Caco-2 (cell line): ENCODE measurements at regions of chr5 and their contacts with region 1.

Region 1: DNA sequence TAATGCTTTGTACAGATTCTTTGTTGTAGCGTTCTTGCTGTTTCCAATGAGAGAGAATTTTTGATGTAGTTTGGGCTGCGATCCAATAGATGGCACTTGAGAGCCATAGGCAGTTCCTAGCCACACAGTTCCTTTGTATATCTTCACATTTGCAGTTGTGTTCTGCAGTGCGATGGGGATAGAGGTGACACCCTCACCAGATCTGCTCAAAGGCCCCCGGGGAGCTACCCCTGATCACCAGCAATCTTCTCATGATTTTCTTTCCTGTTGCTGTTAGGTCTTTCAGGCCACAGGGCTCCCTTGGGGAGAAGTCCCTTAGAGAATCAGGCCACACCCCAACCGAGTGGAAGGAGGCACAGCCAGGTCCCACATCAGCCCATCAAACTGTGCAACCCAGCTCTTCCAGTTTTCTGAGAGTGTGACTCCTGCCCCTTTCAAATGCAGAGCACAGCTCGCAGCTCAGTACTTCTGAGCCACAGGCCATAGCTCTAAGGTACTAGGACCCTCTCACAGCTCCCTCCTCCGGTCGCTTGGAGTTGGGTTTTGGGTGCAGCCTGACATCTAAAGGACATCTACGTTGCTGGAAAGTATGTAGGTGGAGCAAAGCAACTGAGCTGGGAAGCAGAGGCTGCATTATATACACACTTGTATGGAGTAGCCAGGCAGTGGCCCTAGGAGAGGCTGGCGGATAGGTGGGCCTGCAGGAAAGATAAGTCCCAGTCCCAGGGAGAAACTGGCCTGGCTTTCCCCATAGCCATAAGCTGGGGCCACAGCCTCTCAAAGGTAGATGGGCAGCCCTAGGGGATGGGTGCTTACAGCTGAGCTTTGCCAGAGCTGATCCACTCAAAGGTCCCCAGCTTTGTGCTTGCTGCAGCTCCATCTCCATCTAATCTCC is 353.5 kb downstream of the SLCO4C1 start:
- DNase-seq: peak; percentile 39 to 59
- H3K4me3 ChIP-seq: no peak overlapping the region
- H3K4me3 Mint-ChIP-seq: no peak overlapping the region
- H3K27ac Mint-ChIP-seq: no peak overlapping the region
- H3K4me1 ChIP-seq: no peaks in the 10 kb centered on the region
- H3K4me1 Mint-ChIP-seq: no peaks in the 10 kb centered on the region
- H3K27me3 ChIP-seq: no peaks in the 10 kb centered on the region; the same call in 1 of the 2 replicates
- H3K27me3 Mint-ChIP-seq: peaks cover 3% of the 10 kb centered on the region
- CTCF ChIP-seq: peak; percentile 69 to 93

Region 2: GRCh38 chr5:101897914-101898313 is 44.7 kb before region 1 on chr5:
- CTCF ChIA-PET with region 1: no interaction called
- POLR2A ChIA-PET with region 1: no interaction called
- intact Hi-C with region 1: no loop called
- DNase-seq: peak in 1 of 2 experiments; percentile 34
- H3K4me3 ChIP-seq: no peak overlapping the region
- H3K4me3 Mint-ChIP-seq: no peak overlapping the region
- H3K27ac Mint-ChIP-seq: no peak overlapping the region
- H3K4me1 ChIP-seq: no peaks in the 10 kb centered on the region
- H3K4me1 Mint-ChIP-seq: no peaks in the 10 kb centered on the region
- H3K27me3 ChIP-seq: no peaks in the 10 kb centered on the region
- H3K27me3 Mint-ChIP-seq: no peaks in the 10 kb centered on the region
- CTCF ChIP-seq: no peak

Region 3: DNA sequence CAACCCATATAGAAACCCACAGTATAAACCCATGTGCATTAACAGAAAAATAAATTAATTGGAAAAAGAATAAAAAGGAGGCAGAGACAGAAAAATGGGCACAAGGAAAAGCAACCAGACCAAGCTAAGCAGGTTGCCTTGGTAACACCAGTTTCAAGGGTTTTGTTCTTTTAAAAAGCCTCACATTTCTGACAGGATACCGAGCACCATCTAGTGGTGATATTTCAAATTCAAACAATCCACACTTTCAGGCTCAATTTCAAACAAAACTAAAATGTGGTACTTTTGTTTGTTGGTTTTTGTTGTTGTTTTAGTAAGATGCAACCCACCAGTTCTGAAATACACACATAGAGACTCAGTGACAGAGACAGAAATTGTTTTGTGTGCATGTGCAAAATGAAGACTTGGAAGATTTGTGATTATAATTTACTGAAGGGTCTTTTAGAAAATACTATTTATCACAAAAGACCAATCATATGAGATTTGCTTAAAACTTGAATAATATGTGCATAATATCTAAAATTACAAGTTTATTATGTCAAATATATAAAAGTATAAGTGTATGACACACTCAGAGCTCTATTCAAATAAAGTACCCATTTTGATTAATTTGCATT is 35.3 kb after region 1 on chr5:
- CTCF ChIA-PET with region 1: interaction called, 5 read pairs
- POLR2A ChIA-PET with region 1: interaction called, 14 read pairs
- intact Hi-C with region 1: loop called (anchors 1 kb)
- DNase-seq: peak in 1 of 2 experiments; percentile 52
- H3K4me3 ChIP-seq: no peak overlapping the region
- H3K4me3 Mint-ChIP-seq: no peak overlapping the region
- H3K27ac Mint-ChIP-seq: no peak overlapping the region
- H3K4me1 ChIP-seq: no peaks in the 10 kb centered on the region
- H3K4me1 Mint-ChIP-seq: no peaks in the 10 kb centered on the region
- H3K27me3 ChIP-seq: no peaks in the 10 kb centered on the region
- H3K27me3 Mint-ChIP-seq: peaks cover 3% of the 10 kb centered on the region
- CTCF ChIP-seq: peak; percentile 66 to 70

Region 4: GRCh38 chr5:102138243-102138653 is 195.7 kb after region 1 on chr5:
- CTCF ChIA-PET with region 1: no interaction called
- POLR2A ChIA-PET with region 1: no interaction called
- intact Hi-C with region 1: loop called (anchors 5 kb)
- DNase-seq: peak; percentile 85 to 93
- H3K4me3 ChIP-seq: no peak overlapping the region
- H3K4me3 Mint-ChIP-seq: peak overlapping the region; percentile 65
- H3K27ac Mint-ChIP-seq: peak overlapping the region; percentile 94
- H3K4me1 ChIP-seq: peaks cover 28% of the 10 kb centered on the region
- H3K4me1 Mint-ChIP-seq: peaks cover 14% of the 10 kb centered on the region
- H3K27me3 ChIP-seq: no peaks in the 10 kb centered on the region
- H3K27me3 Mint-ChIP-seq: no peaks in the 10 kb centered on the region
- CTCF ChIP-seq: no peak